ENCODE measurements at regions of chrX and their contacts with region 1.

Region 1: DNA sequence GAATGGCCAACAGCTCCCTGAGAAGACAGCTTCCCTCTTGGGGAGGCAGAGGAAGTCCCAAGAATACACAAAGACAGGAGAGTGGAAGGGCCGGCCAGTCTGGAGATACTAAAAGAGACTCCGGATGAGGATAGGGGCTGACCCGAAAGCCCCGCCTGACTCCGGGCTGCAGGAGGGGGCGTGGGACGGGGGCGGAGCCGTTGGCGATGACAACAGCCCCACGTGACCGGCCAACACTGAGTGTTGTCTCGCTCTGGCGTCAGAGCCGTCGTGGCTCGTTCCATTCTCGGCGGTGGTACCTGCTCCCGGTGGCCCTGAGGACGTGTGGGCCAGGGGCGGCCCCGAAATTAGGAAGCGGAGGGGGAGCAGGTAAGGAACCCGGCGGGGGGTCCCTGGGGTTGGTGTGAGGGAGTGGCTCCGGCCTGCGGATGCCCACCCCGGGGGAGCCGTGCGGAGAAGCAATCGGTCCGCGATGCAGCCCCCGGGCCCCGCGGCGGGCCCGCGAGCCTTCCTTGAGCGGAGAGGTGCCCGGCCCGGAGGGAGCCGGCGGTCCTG is at the start of gene BEX4:
- DNase-seq: peak; percentile 70
- H3K4me3 Mint-ChIP-seq: peak within 1 kb of the TSS; percentile 84
- H3K27ac Mint-ChIP-seq: peak within 1 kb of the TSS; percentile 67
- H3K4me1 Mint-ChIP-seq: peaks cover 4% of the 10 kb centered on the region
- H3K27me3 Mint-ChIP-seq: peaks cover 5% of the 10 kb centered on the region
- total RNA-seq, gene BEX4: 5.1 and 5.5 TPM in 2 replicates

Region 2: GRCh38 chrX:103248553-103248952 is 33.6 kb after region 1 on chrX:
- intact Hi-C with region 1: loop called (anchors 1 kb)
- DNase-seq: no peak
- H3K4me3 Mint-ChIP-seq: no peak overlapping the region
- H3K27ac Mint-ChIP-seq: no peak overlapping the region
- H3K4me1 Mint-ChIP-seq: peaks cover 9% of the 10 kb centered on the region
- H3K27me3 Mint-ChIP-seq: peaks cover 8% of the 10 kb centered on the region

Region 3: GRCh38 chrX:103254921-103255493 is 40.1 kb after region 1 on chrX and contains the start of gene TCEAL8:
- intact Hi-C with region 1: loop called (anchors 2 kb)
- DNase-seq: peak; percentile 32
- H3K4me3 Mint-ChIP-seq: peak within 1 kb of the TSS; percentile 98
- H3K27ac Mint-ChIP-seq: peak within 1 kb of the TSS; percentile 92
- H3K4me1 Mint-ChIP-seq: peaks cover 25% of the 10 kb centered on the region
- H3K27me3 Mint-ChIP-seq: peaks cover 8% of the 10 kb centered on the region
- total RNA-seq, gene TCEAL8: 20.7 and 21.9 TPM in 2 replicates

Region 4: DNA sequence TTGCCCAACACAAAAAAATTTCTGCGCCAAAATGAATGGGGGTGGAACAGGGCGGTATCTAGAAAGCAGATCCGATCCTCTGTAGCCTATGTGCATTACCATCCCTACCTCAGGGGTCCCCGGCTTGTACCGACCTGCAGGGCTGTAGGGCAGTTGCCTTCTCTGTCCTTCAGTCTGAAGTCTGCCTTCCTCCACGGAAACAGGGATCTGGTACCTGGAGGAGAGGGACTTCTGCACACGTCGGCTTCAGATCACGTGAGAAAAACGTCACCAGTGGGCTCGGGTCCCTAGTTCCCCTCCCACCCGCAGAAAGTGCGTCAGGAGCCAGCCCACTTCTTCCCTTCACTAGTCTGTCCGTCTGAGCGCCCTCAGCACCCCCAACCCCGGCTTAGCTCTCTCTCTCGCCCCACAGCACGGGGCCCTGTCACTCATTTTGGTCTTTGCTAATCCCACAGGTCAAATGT is 61.6 kb after region 1 on chrX and contains the start of gene TCEAL5:
- intact Hi-C with region 1: no loop called
- DNase-seq: no peak
- H3K4me3 Mint-ChIP-seq: no peak within 1 kb of the TSS
- H3K27ac Mint-ChIP-seq: no peak within 1 kb of the TSS
- H3K4me1 Mint-ChIP-seq: no peaks in the 10 kb centered on the region
- H3K27me3 Mint-ChIP-seq: peaks cover 16% of the 10 kb centered on the region
- total RNA-seq, gene TCEAL5: not detected in 2 replicates

Region 5: DNA sequence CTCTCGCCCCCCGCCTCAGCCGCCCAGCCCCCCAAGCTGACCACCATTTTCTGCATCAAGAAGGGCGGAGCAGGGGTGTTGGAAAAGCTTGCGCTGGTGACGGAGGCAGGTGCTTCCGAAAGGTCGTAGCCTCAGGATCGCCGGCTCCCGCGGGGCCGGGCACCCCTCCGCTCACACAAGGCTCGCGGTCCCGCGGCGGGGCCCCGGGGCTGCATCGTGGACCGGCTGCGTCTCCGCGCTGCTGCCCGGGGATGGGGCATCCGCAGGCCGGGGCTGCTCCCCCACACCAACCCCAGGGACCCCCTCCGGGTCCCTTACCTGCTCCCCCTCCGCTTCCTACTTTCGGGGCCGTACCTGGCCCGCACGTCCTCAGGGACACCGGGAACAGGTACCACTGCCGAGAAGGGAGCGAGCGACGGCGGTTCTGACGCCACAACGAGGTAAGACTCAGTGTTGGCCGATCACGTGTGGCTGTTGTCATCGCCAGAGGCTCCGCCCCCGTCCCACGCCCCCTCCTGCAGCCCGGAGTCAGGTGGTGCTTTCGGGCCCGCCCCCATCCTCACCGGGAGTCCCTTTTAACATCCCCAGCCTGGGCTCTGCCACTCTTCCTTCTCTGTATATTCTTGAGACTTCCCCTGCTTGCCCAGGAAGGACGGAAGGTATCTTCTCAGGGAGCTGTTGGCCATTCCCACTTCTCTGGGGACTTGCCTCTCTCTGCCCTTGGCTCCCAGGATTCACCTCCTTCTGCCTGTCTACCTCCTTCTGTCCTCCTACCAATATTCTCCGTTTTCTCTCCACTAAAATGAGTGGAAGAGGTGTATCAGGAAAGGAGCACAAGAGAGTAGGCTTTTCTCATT is 95.8 kb after region 1 on chrX and contains the start of gene BEX2:
- intact Hi-C with region 1: loop called (anchors 1 kb)
- DNase-seq: peak; percentile 68
- H3K4me3 Mint-ChIP-seq: peak within 1 kb of the TSS; percentile 75
- H3K27ac Mint-ChIP-seq: peak within 1 kb of the TSS; percentile 29
- H3K4me1 Mint-ChIP-seq: no peaks in the 10 kb centered on the region
- H3K27me3 Mint-ChIP-seq: peaks cover 13% of the 10 kb centered on the region
- total RNA-seq, gene BEX2: 3.5 and 3.7 TPM in 2 replicates

Region 6: DNA sequence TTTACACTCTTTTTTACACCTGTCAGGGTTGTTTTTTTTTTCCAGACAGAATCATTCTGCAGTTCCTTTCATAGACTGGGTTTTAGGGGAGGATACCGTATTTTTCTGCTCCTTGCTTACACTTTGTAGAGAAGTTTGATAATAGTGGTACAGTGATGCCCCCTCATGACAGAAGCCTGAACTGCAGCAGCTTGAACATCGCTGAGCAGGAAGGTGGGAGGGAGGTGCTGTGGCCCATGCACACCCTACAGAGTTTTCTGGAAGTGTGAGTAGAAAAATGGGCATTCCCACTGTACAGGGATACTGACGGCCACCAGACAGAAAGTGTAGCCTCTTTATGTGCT is 249.8 kb after region 1 on chrX:
- intact Hi-C with region 1: loop called (anchors 1 kb)
- DNase-seq: peak; percentile 55
- H3K4me3 Mint-ChIP-seq: peak overlapping the region; percentile 93
- H3K27ac Mint-ChIP-seq: peak overlapping the region; percentile 58
- H3K4me1 Mint-ChIP-seq: peaks cover 22% of the 10 kb centered on the region
- H3K27me3 Mint-ChIP-seq: peaks cover 9% of the 10 kb centered on the region